Tibial artery (tissue), 4 donors: ENCODE measurements at regions of chr18 and their contacts with region 1.

Region 1: DNA sequence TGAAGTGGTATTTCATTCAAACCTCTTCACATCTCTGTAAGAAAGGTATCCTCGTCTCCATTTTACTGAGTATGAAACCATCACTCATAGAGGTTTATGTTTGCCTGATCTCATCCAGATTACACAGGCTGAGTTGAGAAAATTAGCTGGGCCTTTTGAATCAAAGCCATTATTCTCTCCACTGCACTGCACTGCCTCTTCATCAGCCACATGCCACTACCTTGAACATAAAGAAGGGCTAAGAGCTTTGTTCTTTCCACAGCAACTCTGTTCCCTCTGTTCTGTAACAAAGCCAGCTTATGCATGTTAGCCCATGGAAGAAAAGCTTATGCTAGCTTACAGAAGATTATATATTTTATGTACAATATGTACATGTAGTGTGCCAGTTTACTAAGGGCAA is 362.6 kb upstream of the DLGAP1 start:
- DNase-seq: no peak
- H3K4me3 ChIP-seq: no peak overlapping the region
- H3K27ac ChIP-seq: no peak overlapping the region
- H3K4me1 ChIP-seq: no peaks in the 10 kb centered on the region
- H3K27me3 ChIP-seq: no peaks in the 10 kb centered on the region
- CTCF ChIP-seq: no peak

Region 2: GRCh38 chr18:4181882-4182568 is 635.6 kb before region 1 on chr18:
- intact Hi-C with region 1: no loop called
- DNase-seq: no peak
- H3K4me3 ChIP-seq: no peak overlapping the region
- H3K27ac ChIP-seq: no peak overlapping the region
- H3K4me1 ChIP-seq: no peaks in the 10 kb centered on the region
- H3K27me3 ChIP-seq: no peaks in the 10 kb centered on the region
- CTCF ChIP-seq: no peak

Region 3: DNA sequence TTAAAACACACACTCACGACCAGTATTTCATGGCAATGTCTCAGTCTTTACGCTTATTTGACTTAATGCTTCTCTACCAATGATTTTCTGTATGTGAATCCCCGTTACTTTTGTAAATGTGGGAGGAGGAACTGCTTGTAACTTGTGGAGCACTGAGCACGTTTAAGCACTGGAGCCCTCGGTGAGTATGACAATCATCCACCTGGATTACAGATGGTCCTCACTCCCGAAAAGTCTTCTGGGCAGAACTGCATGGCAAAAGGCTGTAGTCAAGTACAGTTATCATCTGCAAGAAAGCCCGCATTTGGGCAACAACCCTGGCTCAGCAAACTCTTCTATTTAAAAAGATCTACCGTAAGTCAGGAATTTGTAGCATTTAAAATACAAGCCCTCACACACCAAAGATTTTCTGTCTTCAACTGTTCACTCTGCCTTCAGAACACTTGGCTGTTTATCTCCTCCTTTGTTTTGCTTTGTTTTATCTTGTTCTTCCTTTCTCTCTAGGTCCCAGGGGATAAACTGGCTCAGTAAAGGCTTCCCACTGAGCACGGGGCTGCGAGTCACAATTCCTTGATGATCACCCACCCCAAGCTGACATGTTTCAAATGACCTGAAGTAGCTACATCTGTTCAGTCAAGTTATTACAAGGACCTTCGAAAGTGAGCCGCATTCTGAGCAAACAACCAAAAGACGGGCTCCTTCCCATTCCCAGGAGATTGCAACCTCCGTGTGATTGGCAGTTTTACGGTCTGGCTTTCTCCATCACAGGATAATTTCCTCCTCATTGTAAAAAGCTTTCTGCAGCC is 464.7 kb before region 1 on chr18:
- intact Hi-C with region 1: loop called (anchors 2 kb)
- DNase-seq: no peak
- H3K4me3 ChIP-seq: no peak overlapping the region
- H3K27ac ChIP-seq: no peak overlapping the region
- H3K4me1 ChIP-seq: no peaks in the 10 kb centered on the region
- H3K27me3 ChIP-seq: no peaks in the 10 kb centered on the region
- CTCF ChIP-seq: no peak

Region 4: DNA sequence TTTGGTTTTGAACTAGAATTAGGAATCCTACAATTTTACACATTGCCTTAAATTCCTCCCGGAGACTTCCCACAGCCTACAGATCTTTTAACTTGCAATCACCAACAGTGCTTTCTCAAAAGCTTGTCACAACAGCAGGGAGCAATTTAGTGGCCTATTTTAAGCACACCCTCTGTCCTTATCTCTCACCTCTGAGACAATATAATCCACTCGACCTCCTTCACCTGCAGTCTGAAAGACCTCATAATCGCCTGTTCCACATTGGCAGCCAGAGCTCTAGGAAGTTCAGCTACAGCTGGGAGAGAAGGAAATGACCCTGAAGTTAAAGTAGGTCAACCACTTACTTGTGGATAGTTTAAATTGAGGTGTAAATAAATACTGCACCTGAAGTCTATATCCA is 112.9 kb before region 1 on chr18:
- intact Hi-C with region 1: no loop called
- DNase-seq: no peak
- H3K4me3 ChIP-seq: no peak overlapping the region
- H3K27ac ChIP-seq: no peak overlapping the region
- H3K4me1 ChIP-seq: no peaks in the 10 kb centered on the region
- H3K27me3 ChIP-seq: no peaks in the 10 kb centered on the region
- CTCF ChIP-seq: no peak

Region 5: DNA sequence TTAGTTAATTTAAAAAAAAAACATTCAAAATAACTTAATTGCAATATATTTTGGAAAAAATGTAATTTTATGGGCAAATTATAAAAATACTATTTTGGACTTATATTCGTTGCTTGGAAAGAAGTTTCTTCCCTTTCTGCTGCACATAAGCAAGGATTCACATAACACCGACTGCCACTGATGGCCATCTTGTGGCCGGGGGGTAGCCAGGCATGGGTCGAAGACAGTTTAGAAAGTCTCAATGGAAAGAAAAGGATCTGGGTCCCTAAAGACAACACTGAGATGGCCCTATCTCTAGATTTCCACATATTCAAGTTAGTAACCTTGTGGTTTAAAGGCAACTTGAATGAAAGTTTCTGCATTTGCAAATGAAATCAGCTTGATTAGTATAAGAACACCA is 60.8 kb after region 1 on chr18:
- intact Hi-C with region 1: no loop called
- DNase-seq: no peak
- H3K4me3 ChIP-seq: no peak overlapping the region
- H3K27ac ChIP-seq: no peak overlapping the region
- H3K4me1 ChIP-seq: no peaks in the 10 kb centered on the region
- H3K27me3 ChIP-seq: no peaks in the 10 kb centered on the region
- CTCF ChIP-seq: no peak

Region 6: DNA sequence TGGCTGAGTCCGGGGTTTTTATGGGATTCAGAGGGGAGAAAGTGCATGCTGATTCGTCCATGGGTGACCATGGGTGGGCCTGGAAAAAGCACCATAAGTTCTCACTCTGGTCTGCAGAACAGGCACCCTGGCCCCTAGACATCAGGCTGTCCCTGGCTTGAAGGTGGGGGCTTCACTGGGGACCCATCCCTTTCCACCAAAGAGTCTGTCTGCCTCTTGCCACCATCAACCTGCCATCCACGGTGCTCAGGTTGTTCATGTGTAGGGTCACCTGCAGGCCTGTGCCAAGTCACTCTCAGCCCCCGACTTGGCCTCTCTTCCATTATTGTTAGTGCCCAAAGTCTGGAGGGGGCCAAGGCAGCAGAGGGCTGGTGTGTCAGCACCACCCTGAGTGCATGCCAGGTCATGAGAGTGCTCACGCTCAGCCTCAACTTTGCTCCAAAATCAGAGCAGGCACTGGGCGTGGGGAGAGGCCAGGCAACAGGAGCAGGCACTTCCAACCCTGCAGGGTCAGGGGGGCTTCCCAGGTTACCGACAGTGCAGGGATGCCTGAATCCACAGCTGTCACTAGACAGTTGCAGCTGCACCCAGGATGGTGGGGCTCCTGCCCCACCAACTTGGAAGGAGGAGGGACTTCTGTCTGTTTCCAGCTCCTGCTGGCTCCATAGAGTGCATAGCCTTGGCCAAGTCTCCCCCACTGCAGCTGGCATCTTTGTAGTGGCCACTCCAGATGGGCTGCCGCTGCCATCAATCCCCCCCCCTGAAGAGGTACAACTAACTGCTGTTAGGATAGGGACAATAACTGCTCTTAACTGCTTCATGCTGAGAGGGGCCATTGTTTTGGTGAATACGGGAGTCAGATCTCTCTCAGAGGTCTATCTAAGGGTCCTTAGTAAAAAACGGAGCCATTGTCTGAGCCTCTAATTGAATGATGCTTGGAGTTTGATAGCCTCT is 170.1 kb after region 1 on chr18:
- intact Hi-C with region 1: no loop called
- DNase-seq: no peak
- H3K4me3 ChIP-seq: no peak overlapping the region
- H3K27ac ChIP-seq: no peak overlapping the region
- H3K4me1 ChIP-seq: no peaks in the 10 kb centered on the region
- H3K27me3 ChIP-seq: no peaks in the 10 kb centered on the region
- CTCF ChIP-seq: no peak